ENCODE measurements at regions of chr7 and their contacts with region 1.

Region 1: GRCh38 chr7:100049441-100050311 is at the start of gene ZSCAN21:
- DNase-seq: peak; percentile 76 to 82 (median 77)
- H3K4me3 ChIP-seq: peak within 1 kb of the TSS; percentile 67 to 94
- H3K4me3 Mint-ChIP-seq: peak within 1 kb of the TSS; percentile 91 to 97 (median 94)
- H3K27ac ChIP-seq: peak within 1 kb of the TSS; percentile 83
- H3K27ac Mint-ChIP-seq: peak within 1 kb of the TSS; percentile 91 to 98 (median 97)
- H3K4me1 ChIP-seq: peaks cover 13% of the 10 kb centered on the region
- H3K4me1 Mint-ChIP-seq: peaks cover 11 to 28% (median 18%) of the 10 kb centered on the region in 4 donors
- H3K27me3 ChIP-seq: no peaks in the 10 kb centered on the region
- H3K27me3 Mint-ChIP-seq: no peaks in the 10 kb centered on the region
- total RNA-seq, gene ZSCAN21: 9.9 to 10.6 TPM

Region 2: GRCh38 chr7:99997545-99998137 is 52.0 kb before region 1 on chr7:
- CTCF ChIA-PET with region 1: interaction called, 3 read pairs
- POLR2A ChIA-PET with region 1: interaction called, 6 read pairs
- intact Hi-C with region 1: loop called (anchors 1 kb)
- DNase-seq: peak; percentile 72 to 78 (median 76)
- H3K4me3 ChIP-seq: peak overlapping the region in 1 of 2 donors; percentile 43
- H3K4me3 Mint-ChIP-seq: peak overlapping the region; percentile 58 to 80 (median 75)
- H3K27ac ChIP-seq: peak overlapping the region; percentile 3
- H3K27ac Mint-ChIP-seq: peak overlapping the region; percentile 69 to 95 (median 90)
- H3K4me1 ChIP-seq: peaks cover 18% of the 10 kb centered on the region
- H3K4me1 Mint-ChIP-seq: peaks cover 8 to 15% (median 12%) of the 10 kb centered on the region in 4 donors
- H3K27me3 ChIP-seq: no peaks in the 10 kb centered on the region
- H3K27me3 Mint-ChIP-seq: no peaks in the 10 kb centered on the region

Measured in CD4-positive, alpha-beta memory T cell (primary cell).